Activated CD8-positive, alpha-beta T cell treated with anti-CD3 and anti-CD28 coated beads, Interleukin-2, amount 10 ng/mL, durations not matched to agents 7 days and 5 days (primary cell): ENCODE measurements at regions of chr1 and their contacts with region 1.

Region 1: DNA sequence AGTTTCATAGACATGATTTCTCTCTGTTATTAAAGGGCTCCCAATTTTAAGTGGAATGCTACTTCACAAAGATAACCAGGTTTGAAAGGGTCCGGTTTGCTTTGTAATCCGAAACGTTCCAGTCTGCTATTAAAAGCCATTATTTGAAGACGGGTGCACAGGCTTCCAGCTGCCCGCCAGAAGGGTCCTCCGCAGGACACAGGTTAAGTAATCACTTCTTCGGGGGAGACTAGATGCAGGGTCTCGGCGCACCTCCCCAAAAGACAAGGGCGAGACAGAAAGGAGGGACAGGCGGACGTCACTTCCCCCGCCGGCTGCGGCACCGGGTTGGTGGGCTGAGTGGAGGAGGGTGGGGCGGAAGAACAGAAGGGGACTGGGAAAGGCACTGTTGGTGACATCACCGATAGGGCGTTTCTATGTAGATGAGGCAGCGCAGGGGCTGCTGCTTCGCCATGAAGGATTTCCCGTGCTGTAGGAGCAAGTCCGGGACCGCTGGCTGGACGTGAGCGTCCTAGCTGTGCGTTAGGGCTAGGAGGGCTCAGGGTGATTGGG is 8.9 kb downstream of the RNU1-2 start:
- DNase-seq: peak; percentile 98
- ATAC-seq: peak; percentile 89
- H3K4me3 Mint-ChIP-seq: no peak overlapping the region
- H3K27ac Mint-ChIP-seq: no peak overlapping the region
- H3K4me1 Mint-ChIP-seq: peaks cover 6% of the 10 kb centered on the region
- H3K27me3 Mint-ChIP-seq: no peaks in the 10 kb centered on the region

Region 2: DNA sequence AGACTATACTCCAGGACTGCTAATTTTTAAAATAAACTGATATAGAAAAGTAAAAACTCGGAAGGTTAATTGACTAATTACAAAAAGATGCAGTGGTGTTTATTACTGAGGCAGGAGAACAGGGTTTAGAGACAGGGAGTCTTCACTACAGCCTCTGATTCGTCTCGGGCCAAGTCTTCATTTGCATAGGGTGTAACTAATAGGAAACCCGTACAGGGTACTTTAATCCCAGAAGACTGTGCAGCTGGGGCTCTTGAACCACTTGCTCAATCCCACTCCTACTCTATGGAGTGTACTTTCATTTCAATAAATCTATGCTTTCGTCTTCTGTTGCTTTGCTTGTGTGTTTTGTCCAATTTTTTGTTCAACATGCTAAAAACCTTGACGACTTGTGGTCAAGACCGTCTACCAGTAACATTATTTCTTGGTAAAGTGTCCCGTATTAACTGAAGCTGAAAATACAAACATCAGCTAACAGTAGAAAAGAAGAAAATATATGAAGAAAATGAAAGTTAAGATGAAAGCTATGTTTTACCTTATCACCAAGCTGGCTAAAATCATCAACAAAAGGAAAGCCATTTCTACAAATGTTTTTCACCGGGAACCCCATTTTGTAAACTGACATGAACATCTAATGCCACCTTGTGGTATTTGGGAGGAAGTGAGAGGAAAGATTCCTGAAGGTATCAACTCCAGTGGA is 141.1 kb after region 1 on chr1:
- CTCF ChIA-PET with region 1: interaction called, 11 read pairs
- POLR2A ChIA-PET with region 1: interaction called, 3 read pairs
- DNase-seq: no peak
- ATAC-seq: no peak
- H3K4me3 Mint-ChIP-seq: no peak overlapping the region
- H3K27ac Mint-ChIP-seq: peak overlapping the region; percentile 61
- H3K4me1 Mint-ChIP-seq: peaks cover 21% of the 10 kb centered on the region
- H3K27me3 Mint-ChIP-seq: no peaks in the 10 kb centered on the region